AG04449 (cell line): ENCODE measurements at regions of chr20 and their contacts with region 1.

Region 1: DNA sequence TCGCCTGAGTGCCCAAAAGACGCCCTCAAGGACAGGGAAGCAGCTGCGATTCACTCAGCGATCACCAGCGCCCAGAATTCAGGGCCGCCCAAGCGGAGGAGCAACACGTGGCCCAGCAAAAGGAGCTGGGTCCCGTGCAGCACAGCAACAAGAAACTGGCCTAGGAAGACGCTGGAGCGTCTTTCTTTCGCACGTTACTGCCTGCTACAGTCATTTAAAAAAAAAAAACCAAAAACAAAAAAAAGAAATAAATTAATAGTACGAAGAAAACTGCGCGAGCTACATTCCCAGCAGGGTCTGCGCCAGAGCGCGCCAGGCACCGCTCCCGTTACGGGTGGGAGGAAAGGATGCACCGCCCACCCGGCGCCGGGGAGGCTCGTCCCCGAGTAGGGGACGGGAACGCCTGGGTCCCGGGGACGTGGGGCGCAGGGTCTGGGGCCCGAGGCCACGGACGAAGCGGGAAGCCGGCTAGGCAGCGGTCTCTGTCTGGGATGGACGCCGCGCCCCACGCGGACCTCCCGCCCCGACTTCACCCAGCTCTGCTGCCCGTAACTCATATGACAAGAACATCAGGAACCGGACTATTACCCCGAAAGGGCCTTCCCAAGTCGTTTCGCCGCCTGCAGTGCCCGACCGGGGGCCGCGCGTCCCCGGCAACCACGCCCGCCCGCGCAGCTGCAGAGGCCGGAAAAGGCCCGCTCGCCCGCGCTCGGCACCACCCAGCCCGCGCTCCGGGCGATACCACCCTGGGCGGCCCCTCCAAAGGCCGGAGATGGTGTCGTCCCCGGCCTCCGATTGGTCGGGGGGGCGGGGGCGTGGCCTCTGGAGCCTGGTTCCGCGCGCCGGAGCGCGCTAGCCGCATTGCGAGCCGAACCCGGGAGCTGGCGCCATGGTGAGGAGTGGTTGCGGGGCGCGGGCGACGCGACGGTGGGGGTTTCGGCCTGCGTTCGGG is at the start of gene NOP56:
- DNase-seq: no peak
- H3K4me3 ChIP-seq: peak within 1 kb of the TSS; percentile 90
- CTCF ChIP-seq: no peak

Region 2: GRCh38 chr20:2637246-2637645 is 14.8 kb before region 1 on chr20:
- CTCF ChIA-PET with region 1: interaction called, 14 read pairs
- POLR2A ChIA-PET with region 1: interaction called, 6 read pairs
- DNase-seq: no peak
- H3K4me3 ChIP-seq: no peak overlapping the region
- CTCF ChIP-seq: no peak

Region 3: DNA sequence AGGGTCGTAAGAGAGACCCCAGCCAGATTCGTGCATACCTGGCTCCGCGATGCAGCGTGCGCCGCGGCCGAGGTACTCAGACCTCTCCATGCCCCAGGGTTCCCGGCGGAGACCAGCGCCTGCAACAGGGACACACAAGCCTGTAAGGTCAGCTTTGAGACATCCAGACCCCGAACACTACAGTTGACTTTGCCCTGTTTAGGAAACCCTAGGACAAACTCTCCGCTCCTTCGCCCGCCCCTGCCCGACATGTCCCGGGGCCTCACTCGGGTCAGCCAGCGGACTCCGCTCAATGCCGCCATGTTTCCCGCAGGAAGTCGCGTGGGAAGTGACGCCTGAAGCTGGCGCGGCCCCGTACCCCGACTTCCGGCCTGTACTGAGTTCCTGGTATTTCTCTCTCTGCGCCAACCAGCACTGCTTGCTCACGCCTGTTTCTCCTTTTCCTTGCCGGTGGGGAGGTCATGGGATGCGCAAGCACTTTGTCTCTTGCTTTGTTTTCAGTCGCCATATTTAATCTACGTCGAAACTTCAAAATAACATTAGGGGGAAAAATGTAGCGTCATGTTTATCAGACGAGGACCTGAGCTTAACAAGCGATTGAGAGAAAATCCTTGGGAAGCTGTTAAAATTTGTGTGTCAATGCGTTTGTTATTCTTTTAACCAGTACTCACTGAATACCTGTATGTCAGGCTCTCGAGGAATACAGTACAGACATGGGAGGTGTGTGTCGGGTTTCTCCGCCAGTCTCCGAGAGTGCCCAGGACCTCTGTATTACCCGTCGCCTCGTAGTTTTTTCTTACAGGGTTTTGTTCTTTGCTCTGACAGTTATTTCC is 12.1 kb after region 1 on chr20 and contains the start of gene IDH3B:
- CTCF ChIA-PET with region 1: interaction called, 6 read pairs
- POLR2A ChIA-PET with region 1: interaction called, 36 read pairs
- DNase-seq: peak; percentile 49
- H3K4me3 ChIP-seq: peak within 1 kb of the TSS; percentile 95
- CTCF ChIP-seq: no peak